Activated T-helper 1 cell treated with anti-CD3 and anti-CD28 coated beads, Interleukin-12 subunit alpha, Interleukin-12 subunit beta, Interleukin-2, Interleukin-4 antibody, amounts not matched to agents 30 ng/mL and 10 ng/mL and 1 ng/mL, durations not matched to agents 14 hours and 24 hours and 36 hours (primary cell): ENCODE measurements at regions of chr3 and their contacts with region 1.

Region 1: GRCh38 chr3:13479581-13480339 is at the start of gene HDAC11:
- DNase-seq: peak; percentile 98
- H3K4me3 Mint-ChIP-seq: peak within 1 kb of the TSS; percentile 88
- H3K27ac Mint-ChIP-seq: peak within 1 kb of the TSS; percentile 84
- H3K4me1 Mint-ChIP-seq: peaks cover under 1% of the 10 kb centered on the region
- H3K27me3 Mint-ChIP-seq: peaks cover 7% of the 10 kb centered on the region
- total RNA-seq, gene HDAC11: 1.4 and 2.0 TPM in 2 replicates

Region 2: DNA sequence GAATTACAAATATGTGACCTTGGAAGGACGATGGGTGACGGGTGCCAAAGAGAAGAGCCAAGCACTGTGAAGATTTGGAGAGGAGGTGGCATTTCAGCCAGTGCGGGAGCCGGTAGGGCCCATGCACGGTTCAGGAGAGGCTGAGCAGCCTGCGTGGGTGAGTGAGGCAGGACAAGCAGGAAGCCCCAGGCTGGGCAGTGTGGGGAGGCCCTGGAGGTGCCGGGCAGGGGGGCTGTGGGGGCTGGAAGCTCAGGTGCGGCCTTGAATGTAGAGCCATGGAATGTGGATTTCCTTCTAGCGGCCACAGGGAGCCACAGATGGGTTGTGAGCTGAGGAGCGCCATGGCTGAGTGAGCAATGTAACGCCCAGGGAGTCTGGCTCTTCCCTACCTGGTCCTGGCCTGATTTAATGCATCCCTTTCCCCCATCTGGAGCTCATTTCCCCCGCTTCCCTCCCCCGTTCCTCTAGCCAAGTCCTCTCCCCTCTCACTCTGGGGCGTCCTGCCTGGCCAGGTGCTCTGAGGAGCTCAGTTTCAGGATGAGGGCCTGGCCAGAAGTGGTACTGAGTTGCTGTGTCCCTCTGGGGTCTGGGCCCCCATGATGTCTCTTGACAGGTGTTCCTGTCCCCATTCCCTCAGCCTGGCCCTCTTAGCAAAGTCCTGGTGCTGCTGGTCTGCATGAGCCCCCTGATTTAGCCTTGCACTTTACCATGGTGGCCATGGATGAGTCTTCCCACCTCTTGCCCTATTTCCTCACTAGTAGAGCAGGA is 364.8 kb before region 1 on chr3:
- intact Hi-C with region 1: no loop called
- DNase-seq: no peak
- H3K4me3 Mint-ChIP-seq: no peak overlapping the region
- H3K27ac Mint-ChIP-seq: no peak overlapping the region
- H3K4me1 Mint-ChIP-seq: peaks cover 7% of the 10 kb centered on the region
- H3K27me3 Mint-ChIP-seq: peaks cover 4% of the 10 kb centered on the region

Region 3: DNA sequence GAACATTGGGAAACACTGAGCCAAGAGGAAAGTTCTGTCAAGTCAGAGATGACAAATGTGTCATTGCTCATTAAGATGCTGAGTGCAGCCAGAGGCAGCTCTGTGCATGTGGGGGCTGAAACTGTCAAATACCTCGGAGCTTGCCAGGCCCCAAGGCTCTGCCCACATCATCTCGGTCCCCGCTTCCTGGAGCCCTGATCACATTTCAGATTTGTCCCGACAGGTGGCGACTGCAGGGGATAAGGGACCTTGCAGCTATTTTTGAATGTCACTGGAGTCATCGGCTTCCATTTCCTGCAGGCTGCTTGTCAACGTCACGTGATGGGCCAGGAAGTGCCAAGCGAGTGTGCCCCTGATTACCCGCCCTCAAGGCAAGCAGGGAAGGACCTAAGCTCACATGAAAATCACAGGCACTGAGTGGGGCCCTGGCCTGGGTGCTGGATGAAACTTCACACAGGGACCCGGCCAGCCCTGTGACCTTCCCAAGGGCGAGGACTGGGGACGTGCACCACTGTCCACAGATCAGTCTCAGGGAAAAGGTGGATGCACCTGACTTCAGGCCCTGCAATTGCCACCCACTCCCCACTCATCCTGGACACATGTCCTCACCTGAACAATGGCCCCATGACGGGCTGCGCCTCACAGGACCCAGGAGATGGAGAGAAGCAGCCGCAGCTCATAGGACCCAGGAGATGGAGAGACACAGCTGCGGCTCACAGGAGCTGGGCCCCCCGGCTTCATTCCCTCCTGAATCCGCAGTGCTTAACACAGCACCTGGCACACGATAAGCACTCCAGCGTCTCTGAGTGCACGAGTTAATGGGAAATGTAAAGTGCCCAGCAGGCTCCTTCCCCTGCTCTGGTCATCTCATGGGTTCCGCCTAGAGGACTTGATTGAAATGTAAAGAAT is 133.0 kb before region 1 on chr3:
- intact Hi-C with region 1: loop called (anchors 1 kb)
- DNase-seq: peak; percentile 59
- H3K4me3 Mint-ChIP-seq: no peak overlapping the region
- H3K27ac Mint-ChIP-seq: peak overlapping the region; percentile 74
- H3K4me1 Mint-ChIP-seq: peaks cover 52% of the 10 kb centered on the region
- H3K27me3 Mint-ChIP-seq: no peaks in the 10 kb centered on the region

Region 4: GRCh38 chr3:13405614-13406013 is 74.1 kb before region 1 on chr3:
- intact Hi-C with region 1: no loop called
- DNase-seq: no peak
- H3K4me3 Mint-ChIP-seq: no peak overlapping the region
- H3K27ac Mint-ChIP-seq: no peak overlapping the region
- H3K4me1 Mint-ChIP-seq: peaks cover 23% of the 10 kb centered on the region
- H3K27me3 Mint-ChIP-seq: no peaks in the 10 kb centered on the region

Region 5: DNA sequence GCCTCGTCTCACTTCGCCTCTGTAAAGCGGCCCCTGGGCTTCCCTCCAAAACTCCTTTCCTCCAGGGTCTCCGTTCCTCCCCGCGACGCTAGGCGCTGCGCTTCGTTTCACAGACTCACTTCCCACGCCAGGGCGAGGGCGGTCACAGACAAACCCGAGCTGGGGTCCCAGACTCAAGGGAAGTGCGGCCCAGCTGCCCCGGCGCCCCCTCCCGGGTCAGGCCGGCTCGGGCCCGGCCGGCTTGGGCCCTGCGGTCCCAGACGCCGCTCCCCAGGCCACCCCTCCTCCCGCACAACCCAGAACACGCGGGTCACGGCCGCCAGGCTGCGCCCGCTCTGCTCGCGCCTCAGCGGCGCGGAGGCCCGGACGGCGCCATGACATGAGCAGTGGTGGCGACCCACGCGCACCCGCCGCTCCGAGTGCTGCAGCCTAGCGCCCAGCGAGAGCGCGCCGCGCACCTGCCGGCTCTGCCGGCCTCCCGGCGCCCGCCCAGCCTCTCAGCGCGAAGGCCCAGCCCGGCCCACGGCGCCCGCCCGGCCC is 60.2 kb before region 1 on chr3:
- intact Hi-C with region 1: loop called (anchors 1 kb)
- DNase-seq: peak; percentile 56
- H3K4me3 Mint-ChIP-seq: peak overlapping the region; percentile 88
- H3K27ac Mint-ChIP-seq: peak overlapping the region; percentile 92
- H3K4me1 Mint-ChIP-seq: peaks cover 71% of the 10 kb centered on the region
- H3K27me3 Mint-ChIP-seq: no peaks in the 10 kb centered on the region

Region 6: GRCh38 chr3:13559764-13560525 is 80.2 kb after region 1 on chr3:
- intact Hi-C with region 1: no loop called
- DNase-seq: no peak
- H3K4me3 Mint-ChIP-seq: no peak overlapping the region
- H3K27ac Mint-ChIP-seq: no peak overlapping the region
- H3K4me1 Mint-ChIP-seq: no peaks in the 10 kb centered on the region
- H3K27me3 Mint-ChIP-seq: peaks cover 12% of the 10 kb centered on the region

Region 7: GRCh38 chr3:14651440-14652251 is 1171.9 kb after region 1 on chr3 and contains the start of gene CCDC174:
- intact Hi-C with region 1: loop called (anchors 10 kb)
- DNase-seq: peak; percentile 94
- H3K4me3 Mint-ChIP-seq: peak within 1 kb of the TSS; percentile 99
- H3K27ac Mint-ChIP-seq: peak within 1 kb of the TSS; percentile 90
- H3K4me1 Mint-ChIP-seq: peaks cover 38% of the 10 kb centered on the region
- H3K27me3 Mint-ChIP-seq: peaks cover 4% of the 10 kb centered on the region
- total RNA-seq, gene CCDC174: 16.6 and 21.7 TPM in 2 replicates